WTC11 (cell line): ENCODE measurements at regions of chr14 and their contacts with region 1.

Region 1: DNA sequence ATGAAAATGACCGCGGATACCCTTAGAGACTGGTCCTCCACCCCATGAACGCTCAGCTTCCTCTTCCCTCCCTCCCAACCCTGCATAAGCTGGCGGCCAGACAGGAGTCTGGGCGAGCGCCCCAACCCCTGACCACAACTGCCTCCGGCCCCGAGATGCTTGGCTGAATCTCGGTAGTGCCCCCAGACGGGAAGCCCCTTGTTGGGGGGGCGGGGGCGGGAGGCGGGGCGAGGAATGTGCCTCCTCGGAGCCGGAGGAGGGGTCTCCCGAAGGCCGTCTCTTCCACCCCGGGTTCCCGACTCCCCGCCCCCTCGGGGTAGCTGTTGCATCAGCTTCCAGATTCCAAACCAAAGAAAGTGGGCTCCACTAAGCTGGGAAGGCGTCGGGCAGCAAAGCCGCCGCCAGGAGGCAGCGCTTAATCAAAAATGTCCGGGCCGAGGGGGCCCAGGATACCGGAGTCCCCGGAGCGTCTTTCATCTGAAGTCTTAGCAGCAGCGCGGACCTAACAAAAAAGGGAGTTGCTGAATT is 7.1 kb upstream of the MRPL52 start:
- DNase-seq: peak; percentile 97
- ATAC-seq: peak; percentile 79
- H3K4me3 Mint-ChIP-seq: peak overlapping the region; percentile 77
- H3K27ac Mint-ChIP-seq: peak overlapping the region; percentile 78
- H3K4me1 Mint-ChIP-seq: peaks cover 57% of the 10 kb centered on the region
- H3K27me3 Mint-ChIP-seq: peaks cover 6% of the 10 kb centered on the region
- CTCF ChIP-seq: peak; percentile 67

Region 2: DNA sequence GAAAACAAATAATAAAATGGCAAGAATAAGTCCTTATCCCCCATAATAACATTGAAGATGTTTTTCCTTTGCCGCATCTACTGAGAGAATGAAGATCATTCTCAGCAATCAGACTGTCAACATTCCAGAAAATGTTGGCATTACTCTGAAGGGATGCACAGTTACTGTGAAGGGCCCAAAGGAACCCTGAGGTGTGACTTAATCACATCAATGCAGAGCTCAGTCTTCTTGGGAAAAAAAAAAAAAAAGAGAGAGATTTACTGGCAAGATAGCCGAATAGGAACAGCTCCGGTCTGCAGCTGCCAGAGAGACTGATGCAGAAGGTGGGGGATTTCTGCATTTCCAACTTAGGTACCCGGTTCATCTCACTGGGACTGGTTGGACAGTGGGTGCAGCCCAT is 137.2 kb before region 1 on chr14:
- CTCF ChIA-PET with region 1: no interaction called
- POLR2A ChIA-PET with region 1: no interaction called
- DNase-seq: no peak
- ATAC-seq: no peak
- H3K4me3 Mint-ChIP-seq: no peak overlapping the region
- H3K27ac Mint-ChIP-seq: no peak overlapping the region
- H3K4me1 Mint-ChIP-seq: peaks cover 6% of the 10 kb centered on the region
- H3K27me3 Mint-ChIP-seq: peaks cover 40% of the 10 kb centered on the region
- CTCF ChIP-seq: no peak

Region 3: DNA sequence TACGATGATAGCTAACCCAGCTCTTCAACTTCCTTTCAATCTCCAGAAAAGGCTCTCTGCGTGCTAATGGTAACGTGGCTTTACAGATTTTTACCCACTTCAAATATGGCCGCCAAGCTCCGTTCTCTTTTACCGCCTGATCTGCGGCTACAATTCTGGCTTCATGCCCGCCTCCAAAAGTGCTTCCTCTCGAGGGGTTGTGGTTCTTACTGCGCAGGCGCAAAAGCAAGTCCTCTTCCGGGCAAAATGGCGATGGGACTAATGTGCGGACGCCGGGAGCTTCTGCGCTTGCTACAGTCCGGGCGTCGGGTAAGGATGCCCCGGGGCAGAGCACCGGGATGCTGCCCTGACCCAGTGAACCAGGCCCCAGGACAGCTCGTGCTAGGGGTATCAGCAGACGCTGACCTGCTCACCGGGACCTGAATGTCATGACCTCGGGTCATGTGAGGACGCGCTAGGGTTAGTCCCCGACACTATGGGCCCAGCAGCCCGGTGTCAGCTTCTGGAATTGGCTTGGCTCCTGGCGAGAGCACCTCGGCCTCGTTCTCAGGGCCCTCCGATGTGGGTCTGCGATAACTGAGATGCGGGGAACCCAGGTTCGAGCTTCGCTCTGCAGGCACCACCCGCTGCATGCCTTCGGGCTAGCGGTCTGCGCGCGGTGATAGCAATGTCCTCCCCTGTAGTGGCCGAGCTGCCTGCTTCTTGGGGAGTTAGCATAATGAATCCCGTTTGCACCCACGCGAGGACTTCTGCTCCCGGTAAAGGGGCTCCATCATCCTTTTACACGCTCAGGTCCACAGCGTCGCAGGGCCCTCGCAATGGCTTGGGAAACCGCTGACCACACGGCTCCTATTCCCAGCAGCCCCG is 55.9 kb before region 1 on chr14 and contains the start of gene OXA1L:
- CTCF ChIA-PET with region 1: interaction called, 27 read pairs
- POLR2A ChIA-PET with region 1: interaction called, 23 read pairs
- DNase-seq: peak; percentile 91
- ATAC-seq: peak; percentile 89
- H3K4me3 Mint-ChIP-seq: peak within 1 kb of the TSS; percentile 93
- H3K27ac Mint-ChIP-seq: peak within 1 kb of the TSS; percentile 97
- H3K4me1 Mint-ChIP-seq: peaks cover 26% of the 10 kb centered on the region
- H3K27me3 Mint-ChIP-seq: no peaks in the 10 kb centered on the region
- CTCF ChIP-seq: no peak
- total RNA-seq, gene OXA1L: 133 to 138 TPM (median 135 TPM) in 3 replicates

Region 4: DNA sequence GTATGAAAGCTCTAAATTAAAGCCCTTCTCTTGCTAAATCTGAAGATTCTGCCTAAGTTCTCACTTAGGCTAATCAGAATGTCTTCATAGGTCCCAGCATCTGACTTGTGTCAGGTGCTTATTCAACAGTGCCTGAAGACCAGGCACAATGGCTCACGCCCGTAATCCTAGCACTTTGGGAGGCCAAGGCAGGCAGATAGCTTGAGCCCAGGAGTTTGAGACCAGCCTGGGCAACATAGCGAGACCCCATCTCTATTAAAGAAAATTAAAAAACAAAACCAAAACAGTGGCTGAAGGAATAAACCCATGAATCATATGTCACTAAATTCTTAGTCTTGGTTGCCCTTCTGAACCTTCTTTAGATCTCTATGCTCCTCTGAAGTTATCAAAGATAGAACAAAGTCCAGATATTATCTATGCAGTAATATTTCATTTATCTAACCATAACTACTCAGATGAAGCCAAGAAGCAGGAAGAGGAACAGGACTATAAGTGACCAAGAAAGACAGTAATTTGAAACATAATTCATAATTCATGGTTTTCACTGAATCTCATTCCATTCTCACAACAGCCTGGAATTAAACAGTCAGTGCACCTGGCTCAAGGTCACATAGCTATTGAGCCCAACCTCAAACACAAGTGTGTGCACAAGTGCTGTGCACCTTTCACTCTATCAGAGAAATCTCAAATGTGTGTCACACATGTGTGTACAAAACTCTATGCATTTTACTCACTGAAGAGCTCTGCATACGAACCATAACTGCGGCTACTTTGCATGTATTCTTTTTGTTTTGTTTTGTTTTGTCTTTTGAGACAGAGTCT is 14.0 kb before region 1 on chr14:
- CTCF ChIA-PET with region 1: interaction called, 30 read pairs
- POLR2A ChIA-PET with region 1: interaction called, 10 read pairs
- DNase-seq: no peak
- ATAC-seq: no peak
- H3K4me3 Mint-ChIP-seq: no peak overlapping the region
- H3K27ac Mint-ChIP-seq: no peak overlapping the region
- H3K4me1 Mint-ChIP-seq: peaks cover 14% of the 10 kb centered on the region
- H3K27me3 Mint-ChIP-seq: no peaks in the 10 kb centered on the region
- CTCF ChIP-seq: no peak

Region 5: DNA sequence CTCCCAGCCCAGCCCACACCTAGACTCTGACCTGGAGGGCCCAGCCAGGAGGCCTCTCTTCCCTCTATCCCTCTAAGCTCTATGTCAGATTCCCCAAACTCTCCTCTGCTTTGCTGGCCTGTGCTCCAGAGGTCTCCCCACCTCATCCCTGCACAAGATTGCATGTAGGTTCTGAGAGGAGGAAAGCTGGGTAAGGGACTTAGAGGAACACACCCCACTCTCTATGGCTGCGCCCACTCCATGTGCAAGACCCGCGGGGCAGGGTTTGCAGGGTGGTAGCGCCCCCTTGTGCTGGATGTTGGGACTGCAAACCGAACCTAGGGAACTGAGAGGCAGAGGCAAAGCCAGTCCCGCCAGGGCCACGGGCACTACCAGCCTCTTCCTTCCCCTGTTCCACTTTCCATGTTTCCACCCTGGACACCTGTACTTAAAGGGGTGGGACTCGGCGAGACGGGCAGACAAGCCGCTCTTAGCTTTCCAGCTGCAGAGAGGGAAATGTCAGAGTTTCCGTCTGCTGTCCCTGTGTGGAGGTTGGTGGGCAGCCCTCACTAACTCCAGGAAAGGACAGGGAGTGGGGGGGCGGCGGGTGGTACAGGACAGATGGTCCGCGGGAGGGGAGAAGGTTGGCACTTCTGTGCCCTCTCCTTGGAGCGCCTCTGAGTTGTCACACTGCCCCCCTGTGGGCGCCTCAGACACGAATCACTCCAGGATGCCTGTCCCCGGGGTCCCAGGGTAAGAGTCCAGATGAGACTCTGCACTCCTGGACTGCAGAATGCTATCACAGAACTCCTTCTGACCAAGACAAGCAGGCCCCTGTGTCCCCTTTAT is 30.5 kb after region 1 on chr14:
- CTCF ChIA-PET with region 1: interaction called, 280 read pairs
- POLR2A ChIA-PET with region 1: interaction called, 16 read pairs
- DNase-seq: peak; percentile 98
- ATAC-seq: peak; percentile 85
- H3K4me3 Mint-ChIP-seq: peak overlapping the region; percentile 68
- H3K27ac Mint-ChIP-seq: peak overlapping the region; percentile 87
- H3K4me1 Mint-ChIP-seq: peaks cover 18% of the 10 kb centered on the region
- H3K27me3 Mint-ChIP-seq: no peaks in the 10 kb centered on the region
- CTCF ChIP-seq: peak; percentile 100

Region 6: DNA sequence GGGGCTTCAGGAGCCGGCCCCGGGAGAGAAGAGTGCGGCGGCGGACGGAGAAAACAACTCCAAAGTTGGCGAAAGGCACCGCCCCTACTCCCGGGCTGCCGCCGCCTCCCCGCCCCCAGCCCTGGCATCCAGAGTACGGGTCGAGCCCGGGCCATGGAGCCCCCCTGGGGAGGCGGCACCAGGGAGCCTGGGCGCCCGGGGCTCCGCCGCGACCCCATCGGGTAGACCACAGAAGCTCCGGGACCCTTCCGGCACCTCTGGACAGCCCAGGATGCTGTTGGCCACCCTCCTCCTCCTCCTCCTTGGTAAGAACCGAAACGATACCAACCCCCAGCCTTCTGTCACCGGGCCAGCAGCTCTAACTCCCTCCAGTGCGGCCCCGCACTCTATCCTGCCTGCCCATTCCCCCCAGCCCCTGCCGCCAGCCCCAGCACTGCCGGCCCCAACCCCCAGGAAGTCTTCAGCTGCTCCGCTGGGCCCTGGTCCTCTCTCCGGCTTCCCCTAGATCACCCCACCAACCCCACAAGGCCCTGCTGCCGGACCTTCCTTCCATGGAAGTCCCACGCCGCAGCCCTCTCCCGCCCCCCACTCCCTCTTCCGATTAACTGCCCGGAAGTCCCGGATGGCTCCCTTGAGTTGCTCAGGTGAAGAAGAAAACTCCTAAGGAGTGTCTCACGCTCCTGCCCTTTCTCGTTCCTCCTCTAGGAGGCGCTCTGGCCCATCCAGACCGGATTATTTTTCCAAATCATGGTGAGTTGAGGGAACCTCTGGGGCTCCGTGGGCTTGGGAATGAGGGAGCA is 49.6 kb after region 1 on chr14:
- CTCF ChIA-PET with region 1: interaction called, 38 read pairs
- POLR2A ChIA-PET with region 1: interaction called, 26 read pairs
- DNase-seq: peak; percentile 94
- ATAC-seq: peak; percentile 67
- H3K4me3 Mint-ChIP-seq: peak overlapping the region; percentile 83
- H3K27ac Mint-ChIP-seq: peak overlapping the region; percentile 36
- H3K4me1 Mint-ChIP-seq: peaks cover 18% of the 10 kb centered on the region
- H3K27me3 Mint-ChIP-seq: no peaks in the 10 kb centered on the region
- CTCF ChIP-seq: peak; percentile 90

Region 7: GRCh38 chr14:22900081-22900799 is 77.6 kb after region 1 on chr14:
- CTCF ChIA-PET with region 1: interaction called, 52 read pairs
- POLR2A ChIA-PET with region 1: interaction called, 4 read pairs
- DNase-seq: peak; percentile 28
- ATAC-seq: peak; percentile 79
- H3K4me3 Mint-ChIP-seq: no peak overlapping the region
- H3K27ac Mint-ChIP-seq: no peak overlapping the region
- H3K4me1 Mint-ChIP-seq: peaks cover 8% of the 10 kb centered on the region
- H3K27me3 Mint-ChIP-seq: peaks cover 49% of the 10 kb centered on the region
- CTCF ChIP-seq: 0 out of 2 replicates have a peak, but pooled peaks have one; percentile 27